ENCODE measurements at regions of chr7 and their contacts with region 1.

Region 1: DNA sequence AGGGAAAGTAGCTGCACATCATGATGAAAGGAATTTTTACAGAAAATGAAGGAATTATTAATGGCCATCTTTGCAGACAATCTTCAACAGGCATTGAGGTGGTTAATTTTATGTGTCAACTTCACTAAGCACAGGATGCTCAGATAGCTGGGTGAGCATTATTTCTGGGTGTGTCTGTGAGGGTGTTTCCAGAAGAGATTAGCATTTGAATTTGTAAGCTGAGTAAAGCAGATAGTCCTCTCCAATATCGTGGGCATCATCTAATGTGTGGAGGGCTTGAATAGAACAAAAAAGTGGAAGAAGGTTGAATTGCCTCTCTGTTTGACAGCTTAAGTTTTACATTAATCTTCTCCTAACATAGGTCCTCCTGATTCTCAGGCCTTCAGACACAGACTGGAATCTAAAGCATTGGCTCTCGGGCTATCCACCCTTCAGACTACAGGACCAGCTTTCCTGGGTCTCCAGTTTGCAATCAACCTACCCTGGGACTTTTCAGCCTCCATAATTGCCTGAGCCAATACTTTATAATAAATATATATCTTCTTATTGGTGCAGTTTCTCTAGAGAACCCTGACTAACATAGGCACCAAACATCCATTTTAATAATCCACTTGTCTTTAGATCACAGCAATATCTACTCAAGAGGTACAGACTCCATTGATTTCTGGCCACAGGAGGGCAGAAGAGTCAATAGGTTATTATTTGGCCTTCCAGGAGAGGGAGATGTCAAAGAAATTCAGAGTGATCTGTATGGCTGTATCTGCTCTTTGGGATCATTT is 10.5 kb upstream of the CRPPA start:
- DNase-seq: peak; percentile 55
- H3K4me3 Mint-ChIP-seq: no peak overlapping the region
- H3K27ac Mint-ChIP-seq: no peak overlapping the region
- H3K4me1 Mint-ChIP-seq: peaks cover 51% of the 10 kb centered on the region
- H3K27me3 Mint-ChIP-seq: no peaks in the 10 kb centered on the region
- CTCF ChIP-seq: no peak

Region 2: GRCh38 chr7:16114633-16115032 is 317.2 kb before region 1 on chr7:
- CTCF ChIA-PET with region 1: no interaction called
- intact Hi-C with region 1: loop called (anchors 5 kb)
- DNase-seq: peak; percentile 34
- H3K4me3 Mint-ChIP-seq: no peak overlapping the region
- H3K27ac Mint-ChIP-seq: peak overlapping the region; percentile 21
- H3K4me1 Mint-ChIP-seq: peaks cover 24% of the 10 kb centered on the region
- H3K27me3 Mint-ChIP-seq: no peaks in the 10 kb centered on the region
- CTCF ChIP-seq: peak; percentile 71

Region 3: GRCh38 chr7:16447876-16448275 is 16.0 kb after region 1 on chr7:
- CTCF ChIA-PET with region 1: interaction called, 4 read pairs
- intact Hi-C with region 1: loop called (anchors 1 kb)
- DNase-seq: no peak
- H3K4me3 Mint-ChIP-seq: no peak overlapping the region
- H3K27ac Mint-ChIP-seq: no peak overlapping the region
- H3K4me1 Mint-ChIP-seq: peaks cover 25% of the 10 kb centered on the region
- H3K27me3 Mint-ChIP-seq: no peaks in the 10 kb centered on the region
- CTCF ChIP-seq: no peak

Region 4: GRCh38 chr7:16542401-16542800 is 110.6 kb after region 1 on chr7:
- CTCF ChIA-PET with region 1: no interaction called
- intact Hi-C with region 1: no loop called
- DNase-seq: no peak
- H3K4me3 Mint-ChIP-seq: no peak overlapping the region
- H3K27ac Mint-ChIP-seq: no peak overlapping the region
- H3K4me1 Mint-ChIP-seq: no peaks in the 10 kb centered on the region
- H3K27me3 Mint-ChIP-seq: no peaks in the 10 kb centered on the region
- CTCF ChIP-seq: no peak

Region 5: DNA sequence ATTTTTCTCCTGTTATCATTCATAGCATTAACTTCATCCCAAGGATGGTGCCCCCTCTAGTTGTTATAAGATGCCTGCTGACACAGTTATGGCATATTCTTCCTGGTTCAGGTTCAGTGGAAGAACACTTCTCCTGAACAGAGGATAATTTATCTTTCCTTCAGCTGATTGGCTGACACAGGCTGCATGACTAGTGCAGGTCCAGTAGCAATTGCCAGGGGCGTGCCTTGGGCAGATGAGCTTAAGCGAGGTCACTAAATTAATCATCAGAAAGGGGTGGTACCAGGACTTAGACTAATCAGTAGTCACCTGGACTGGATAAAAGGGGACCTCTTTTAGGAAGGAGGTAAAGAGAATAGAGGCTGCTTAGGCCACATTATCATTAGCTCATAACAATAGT is 256.4 kb after region 1 on chr7:
- CTCF ChIA-PET with region 1: no interaction called
- intact Hi-C with region 1: loop called (anchors 10 kb)
- DNase-seq: no peak
- H3K4me3 Mint-ChIP-seq: no peak overlapping the region
- H3K27ac Mint-ChIP-seq: no peak overlapping the region
- H3K4me1 Mint-ChIP-seq: peaks cover 9% of the 10 kb centered on the region
- H3K27me3 Mint-ChIP-seq: no peaks in the 10 kb centered on the region
- CTCF ChIP-seq: no peak